ENCODE measurements at regions of chr19 and their contacts with region 1.

Region 1: GRCh38 chr19:28530406-28531035 is 682.4 kb downstream of the UQCRFS1 start:
- H3K4me3 ChIP-seq: no peak overlapping the region
- H3K27ac ChIP-seq: no peak overlapping the region
- H3K4me1 ChIP-seq: no peaks in the 10 kb centered on the region
- CTCF ChIP-seq: no peak

Region 2: DNA sequence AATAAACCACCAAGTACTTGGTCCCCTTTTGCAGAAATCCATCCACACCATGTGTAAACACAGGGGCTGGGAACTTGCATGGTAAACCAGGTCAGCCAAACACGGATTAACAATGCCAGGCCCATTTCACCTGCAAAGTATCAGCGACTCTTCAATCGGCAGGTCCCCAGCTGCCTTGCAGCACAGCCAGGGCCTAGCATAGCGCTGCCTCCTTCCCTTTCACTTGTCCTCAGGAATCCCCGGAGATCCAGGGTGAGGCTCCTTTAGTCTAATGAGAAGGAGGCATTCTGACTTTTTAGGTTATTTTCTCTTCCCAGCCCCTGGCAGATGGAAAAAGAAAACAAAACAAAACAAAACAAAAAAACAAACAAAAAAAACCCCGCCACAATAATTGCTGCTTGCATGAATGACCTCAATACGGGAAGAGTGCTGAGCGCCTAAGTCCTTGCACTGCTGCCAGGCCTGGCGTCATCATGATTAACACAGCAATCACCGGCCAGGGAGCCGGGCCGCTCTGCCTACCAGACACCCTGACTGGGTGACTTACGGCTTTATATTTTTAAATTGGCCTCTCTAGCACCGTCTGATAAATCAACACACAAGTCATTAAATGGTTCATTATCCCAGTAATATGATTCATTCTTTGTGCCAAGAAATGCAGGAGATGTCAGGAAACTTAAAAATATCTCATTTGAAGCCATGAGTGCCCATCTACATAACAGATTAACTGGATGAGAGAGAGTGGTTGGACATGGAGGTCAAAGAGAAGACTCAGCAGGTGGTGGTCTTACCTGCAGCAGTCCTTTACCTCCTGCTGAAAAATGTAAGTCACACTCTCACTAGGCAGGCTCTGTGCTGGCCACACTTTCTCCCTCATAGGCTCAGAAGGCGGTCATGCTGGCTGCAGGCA is 10.3 kb before region 1 on chr19:
- CTCF ChIA-PET with region 1: no interaction called
- POLR2A ChIA-PET with region 1: interaction called, 10 read pairs
- H3K4me3 ChIP-seq: no peak overlapping the region
- H3K27ac ChIP-seq: peak overlapping the region; percentile 56
- H3K4me1 ChIP-seq: peaks cover 20% of the 10 kb centered on the region
- CTCF ChIP-seq: no peak